Activated CD4-positive, alpha-beta T cell treated with anti-CD3 and anti-CD28 coated beads for 36 hours (primary cell): ENCODE measurements at regions of chr1 and their contacts with region 1.

Region 1: DNA sequence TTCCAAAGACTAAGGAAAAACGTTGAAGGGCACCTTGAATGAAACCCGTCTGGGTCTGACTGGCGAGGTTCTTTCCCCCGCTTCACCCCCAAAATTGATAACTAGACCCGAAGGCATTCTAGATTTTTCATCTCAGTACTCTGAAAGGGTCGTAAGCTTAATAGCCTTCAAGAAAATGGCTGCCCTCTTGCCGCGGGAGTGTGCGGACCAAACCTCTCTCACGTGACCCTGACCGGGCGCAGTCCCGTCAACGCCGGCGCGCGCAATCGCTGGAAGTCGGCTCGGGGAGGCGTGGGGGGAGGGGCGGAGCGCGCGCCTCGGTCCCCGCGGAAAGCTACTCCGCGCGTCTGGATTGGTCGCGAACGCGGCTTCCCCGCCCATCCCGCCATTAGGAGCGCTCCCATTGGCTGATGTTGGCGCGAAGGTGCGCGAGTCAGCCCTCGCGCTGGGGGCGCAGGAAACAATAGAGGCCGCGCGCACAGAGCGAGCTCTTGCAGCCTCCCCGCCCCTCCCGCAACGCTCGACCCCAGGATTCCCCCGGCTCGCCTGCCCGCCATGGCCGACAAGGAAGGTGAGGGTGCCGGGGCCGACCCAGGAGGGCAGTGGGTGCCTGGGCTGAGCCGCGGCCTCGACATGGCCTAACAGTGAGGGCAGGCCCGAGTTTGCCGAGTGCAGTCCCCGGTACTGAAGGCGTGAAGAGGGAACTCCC is at the start of gene RBBP4:
- DNase-seq: peak; percentile 99
- ATAC-seq: peak; percentile 89
- H3K4me3 Mint-ChIP-seq: peak within 1 kb of the TSS; percentile 90
- H3K27ac Mint-ChIP-seq: peak within 1 kb of the TSS; percentile 99
- H3K4me1 Mint-ChIP-seq: peaks cover 48% of the 10 kb centered on the region
- H3K27me3 Mint-ChIP-seq: no peaks in the 10 kb centered on the region
- total RNA-seq, gene RBBP4: 323 to 331 TPM

Region 2: DNA sequence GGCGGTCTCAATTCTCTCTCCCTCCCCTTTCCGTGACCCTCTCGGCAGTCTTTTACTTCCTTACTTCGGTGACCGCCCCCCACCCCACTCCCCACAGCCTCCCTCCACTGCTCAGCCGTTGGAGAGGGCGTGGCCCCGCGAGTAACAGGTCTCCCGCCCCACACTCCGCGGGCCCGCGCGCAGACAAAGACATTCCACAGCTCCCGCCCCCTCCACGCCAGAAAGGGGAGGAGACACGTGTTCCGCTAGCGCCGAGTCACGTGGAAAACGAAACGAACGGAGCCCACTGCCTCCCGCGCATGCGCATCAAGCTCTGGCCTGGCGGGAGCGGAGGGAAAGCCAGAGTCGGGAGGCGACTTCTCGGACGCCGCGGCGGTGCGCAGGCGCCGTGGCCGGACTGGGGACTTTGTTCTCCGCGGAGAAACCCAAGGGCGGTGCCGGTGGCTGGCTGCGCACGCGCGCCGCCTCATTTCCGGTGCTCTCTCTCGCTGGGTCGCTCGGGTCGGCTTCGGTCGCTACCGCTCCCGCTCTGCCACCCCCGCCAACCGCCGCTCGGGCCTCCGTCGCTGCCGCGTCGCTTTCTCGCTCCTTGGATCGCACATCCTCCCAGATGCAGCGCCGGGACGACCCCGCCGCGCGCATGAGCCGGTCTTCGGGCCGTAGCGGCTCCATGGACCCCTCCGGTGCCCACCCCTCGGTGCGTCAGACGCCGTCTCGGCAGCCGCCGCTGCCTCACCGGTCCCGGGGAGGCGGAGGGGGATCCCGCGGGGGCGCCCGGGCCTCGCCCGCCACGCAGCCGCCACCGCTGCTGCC is 637.3 kb before region 1 on chr1 and contains the start of gene KHDRBS1:
- CTCF ChIA-PET with region 1: no interaction called
- POLR2A ChIA-PET with region 1: no interaction called
- intact Hi-C with region 1: loop called in 1 of 2 experiments (anchors 10 kb)
- DNase-seq: peak; percentile 99
- ATAC-seq: peak; percentile 90
- H3K4me3 Mint-ChIP-seq: peak within 1 kb of the TSS; percentile 97
- H3K27ac Mint-ChIP-seq: peak within 1 kb of the TSS; percentile 95
- H3K4me1 Mint-ChIP-seq: peaks cover 27% of the 10 kb centered on the region
- H3K27me3 Mint-ChIP-seq: no peaks in the 10 kb centered on the region
- total RNA-seq, gene KHDRBS1: 198 to 206 TPM

Region 3: DNA sequence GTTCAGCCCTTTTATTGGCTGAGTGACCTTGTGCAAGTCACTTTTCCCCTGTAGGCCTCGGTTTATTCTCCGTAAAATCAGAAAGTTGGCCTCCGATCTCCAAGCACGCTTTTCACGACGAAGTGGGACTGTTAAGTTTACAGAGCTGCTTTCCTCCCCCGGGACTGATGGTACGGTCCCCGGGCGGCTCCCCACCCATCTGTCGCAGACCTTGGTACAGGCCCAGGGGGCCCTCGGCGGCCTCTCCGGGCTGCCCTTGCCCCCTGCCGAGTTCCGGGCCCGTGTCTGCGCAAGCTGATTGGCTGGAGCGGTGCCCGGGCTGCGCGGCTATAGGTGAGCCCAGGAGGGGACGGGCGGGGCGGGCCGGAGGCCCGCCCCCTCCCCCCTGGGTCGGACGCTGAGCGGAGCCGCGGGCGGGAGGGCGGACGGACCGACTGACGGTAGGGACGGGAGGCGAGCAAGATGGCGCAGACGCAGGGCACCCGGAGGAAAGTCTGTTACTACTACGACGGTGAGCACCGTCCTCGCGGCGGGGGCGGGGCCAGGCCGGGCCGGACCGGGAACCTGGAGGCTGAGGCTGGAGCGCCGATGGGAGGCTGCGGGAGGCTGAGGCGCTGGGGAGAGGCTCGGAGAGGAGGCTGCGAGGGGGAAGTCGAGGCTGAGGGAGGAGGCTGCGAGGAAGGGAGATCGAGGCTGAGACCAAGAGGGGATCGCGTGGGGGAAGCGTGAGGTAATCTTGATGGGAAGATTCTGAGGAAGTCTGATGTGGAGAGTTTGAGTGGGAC is 359.0 kb before region 1 on chr1 and contains the start of gene HDAC1:
- CTCF ChIA-PET with region 1: no interaction called
- POLR2A ChIA-PET with region 1: interaction called, 3 read pairs
- intact Hi-C with region 1: loop called in 1 of 2 experiments (anchors 1 kb)
- DNase-seq: peak; percentile 99
- ATAC-seq: peak; percentile 98
- H3K4me3 Mint-ChIP-seq: peak within 1 kb of the TSS; percentile 100
- H3K27ac Mint-ChIP-seq: peak within 1 kb of the TSS; percentile 99
- H3K4me1 Mint-ChIP-seq: peaks cover 43% of the 10 kb centered on the region
- H3K27me3 Mint-ChIP-seq: no peaks in the 10 kb centered on the region
- total RNA-seq, gene HDAC1: 132 to 146 TPM

Region 4: DNA sequence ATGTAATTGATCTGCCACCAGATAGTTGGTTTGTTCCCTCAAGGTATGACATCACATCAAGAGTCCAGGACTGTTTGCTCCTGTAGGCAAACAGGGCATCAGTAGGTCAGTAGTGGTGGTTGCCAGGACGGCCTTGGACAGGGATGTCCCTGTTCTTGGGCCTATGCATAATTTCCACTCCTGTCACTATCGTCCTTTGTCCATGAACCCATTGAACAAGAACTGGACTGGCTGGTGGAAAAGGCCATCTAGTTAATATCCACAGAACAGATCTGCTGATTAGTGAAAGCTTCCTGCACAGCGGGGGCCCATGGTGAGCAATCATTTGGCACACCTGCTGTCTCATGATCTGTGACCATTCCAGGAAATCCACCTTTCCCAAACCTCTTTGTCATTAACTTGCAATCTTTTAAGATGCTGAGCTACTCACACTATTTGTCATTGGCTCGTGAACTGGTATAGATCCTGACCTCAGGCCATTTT is 244.2 kb before region 1 on chr1:
- CTCF ChIA-PET with region 1: no interaction called
- POLR2A ChIA-PET with region 1: no interaction called
- intact Hi-C with region 1: no loop called
- DNase-seq: no peak
- ATAC-seq: no peak
- H3K4me3 Mint-ChIP-seq: no peak overlapping the region
- H3K27ac Mint-ChIP-seq: no peak overlapping the region
- H3K4me1 Mint-ChIP-seq: peaks cover 2% of the 10 kb centered on the region
- H3K27me3 Mint-ChIP-seq: no peaks in the 10 kb centered on the region

Region 5: GRCh38 chr1:32538887-32539583 is 111.9 kb before region 1 on chr1 and contains the start of gene ZBTB8A:
- CTCF ChIA-PET with region 1: no interaction called
- POLR2A ChIA-PET with region 1: no interaction called
- intact Hi-C with region 1: loop called in 1 of 2 experiments (anchors 1 kb)
- DNase-seq: peak; percentile 42
- ATAC-seq: no peak
- H3K4me3 Mint-ChIP-seq: peak within 1 kb of the TSS; percentile 69
- H3K27ac Mint-ChIP-seq: peak within 1 kb of the TSS; percentile 15
- H3K4me1 Mint-ChIP-seq: peaks cover 8% of the 10 kb centered on the region
- H3K27me3 Mint-ChIP-seq: peaks cover 67% of the 10 kb centered on the region
- total RNA-seq, gene ZBTB8A: 0.30 to 0.35 TPM

Region 6: GRCh38 chr1:32817159-32817814 is 166.4 kb after region 1 on chr1 and contains the starts of genes S100PBP and YARS1:
- CTCF ChIA-PET with region 1: no interaction called
- POLR2A ChIA-PET with region 1: no interaction called
- intact Hi-C with region 1: loop called in 1 of 2 experiments (anchors 1 kb)
- DNase-seq: peak; percentile 100
- ATAC-seq: peak; percentile 96
- H3K4me3 Mint-ChIP-seq: peak within 1 kb of the TSS; percentile 97
- H3K27ac Mint-ChIP-seq: peak within 1 kb of the TSS; percentile 99
- H3K4me1 Mint-ChIP-seq: peaks cover 48% of the 10 kb centered on the region
- H3K27me3 Mint-ChIP-seq: no peaks in the 10 kb centered on the region
- total RNA-seq, gene S100PBP: 27.9 to 34.3 TPM
- total RNA-seq, gene YARS1: 259 to 309 TPM

Region 7: DNA sequence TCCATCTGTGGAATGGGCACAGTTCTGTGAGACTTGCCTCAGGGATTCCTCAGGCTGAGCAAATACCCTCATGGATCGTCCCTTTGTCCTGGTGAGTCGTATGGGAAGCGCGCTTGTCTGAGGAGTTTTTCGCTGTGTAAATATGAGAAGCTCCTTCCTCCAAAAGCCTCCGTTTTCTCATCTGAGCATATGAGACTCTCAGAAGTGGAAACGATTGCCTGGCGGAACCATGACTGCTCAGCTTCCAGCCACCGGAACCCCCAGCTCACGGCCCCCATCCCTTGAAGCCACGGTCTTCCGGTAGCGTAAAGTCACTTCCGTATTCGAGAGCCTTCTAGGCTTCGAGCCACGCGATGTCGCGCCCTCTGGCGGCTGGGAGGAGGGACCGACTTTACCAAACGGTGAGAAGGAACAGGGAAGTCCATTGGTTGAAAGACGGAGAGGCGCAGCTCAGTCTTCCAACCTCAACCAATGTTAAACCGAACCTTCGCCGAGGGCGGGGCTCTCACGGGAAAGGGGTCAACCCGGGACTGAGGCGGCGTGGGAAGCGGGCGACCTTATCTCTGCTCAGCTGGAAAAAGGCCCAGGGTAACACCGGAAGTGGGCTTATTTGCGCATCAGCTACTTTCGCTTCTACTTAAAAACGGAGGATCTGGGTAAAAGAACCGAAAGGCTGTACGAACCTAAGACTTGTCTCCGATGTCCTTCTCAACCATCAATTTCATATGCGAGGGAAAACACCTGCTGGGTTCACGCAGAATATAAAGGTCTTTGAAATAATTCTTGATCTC is 476.3 kb after region 1 on chr1:
- CTCF ChIA-PET with region 1: no interaction called
- POLR2A ChIA-PET with region 1: interaction called, 3 read pairs
- intact Hi-C with region 1: loop called in 1 of 2 experiments (anchors 1 kb)
- DNase-seq: peak; percentile 99
- ATAC-seq: peak; percentile 95
- H3K4me3 Mint-ChIP-seq: peak overlapping the region; percentile 97
- H3K27ac Mint-ChIP-seq: peak overlapping the region; percentile 98
- H3K4me1 Mint-ChIP-seq: peaks cover 40% of the 10 kb centered on the region
- H3K27me3 Mint-ChIP-seq: no peaks in the 10 kb centered on the region